PC-9 (cell line): ENCODE measurements at regions of chr2 and their contacts with region 1.

Region 1: GRCh38 chr2:109613922-109614714 is at the starts of genes SEPTIN10 and SOWAHC:
- DNase-seq: peak; percentile 92 to 97
- H3K4me3 ChIP-seq: peak within 1 kb of the TSS; percentile 82
- H3K27ac ChIP-seq: peak within 1 kb of the TSS; percentile 55
- H3K4me1 ChIP-seq: peaks cover 57% of the 10 kb centered on the region
- H3K27me3 ChIP-seq: no peaks in the 10 kb centered on the region
- CTCF ChIP-seq: no peak
- total RNA-seq, gene SEPTIN10: 112 and 119 TPM in 2 replicates
- total RNA-seq, gene SOWAHC: 12.8 and 14.3 TPM in 2 replicates

Region 2: GRCh38 chr2:109435901-109436598 is 178.1 kb before region 1 on chr2:
- CTCF ChIA-PET with region 1: no interaction called
- POLR2A ChIA-PET with region 1: no interaction called
- intact Hi-C with region 1: no loop called
- DNase-seq: no peak
- H3K4me3 ChIP-seq: no peak overlapping the region
- H3K27ac ChIP-seq: no peak overlapping the region
- H3K4me1 ChIP-seq: no peaks in the 10 kb centered on the region
- H3K27me3 ChIP-seq: no peaks in the 10 kb centered on the region
- CTCF ChIP-seq: no peak

Region 3: DNA sequence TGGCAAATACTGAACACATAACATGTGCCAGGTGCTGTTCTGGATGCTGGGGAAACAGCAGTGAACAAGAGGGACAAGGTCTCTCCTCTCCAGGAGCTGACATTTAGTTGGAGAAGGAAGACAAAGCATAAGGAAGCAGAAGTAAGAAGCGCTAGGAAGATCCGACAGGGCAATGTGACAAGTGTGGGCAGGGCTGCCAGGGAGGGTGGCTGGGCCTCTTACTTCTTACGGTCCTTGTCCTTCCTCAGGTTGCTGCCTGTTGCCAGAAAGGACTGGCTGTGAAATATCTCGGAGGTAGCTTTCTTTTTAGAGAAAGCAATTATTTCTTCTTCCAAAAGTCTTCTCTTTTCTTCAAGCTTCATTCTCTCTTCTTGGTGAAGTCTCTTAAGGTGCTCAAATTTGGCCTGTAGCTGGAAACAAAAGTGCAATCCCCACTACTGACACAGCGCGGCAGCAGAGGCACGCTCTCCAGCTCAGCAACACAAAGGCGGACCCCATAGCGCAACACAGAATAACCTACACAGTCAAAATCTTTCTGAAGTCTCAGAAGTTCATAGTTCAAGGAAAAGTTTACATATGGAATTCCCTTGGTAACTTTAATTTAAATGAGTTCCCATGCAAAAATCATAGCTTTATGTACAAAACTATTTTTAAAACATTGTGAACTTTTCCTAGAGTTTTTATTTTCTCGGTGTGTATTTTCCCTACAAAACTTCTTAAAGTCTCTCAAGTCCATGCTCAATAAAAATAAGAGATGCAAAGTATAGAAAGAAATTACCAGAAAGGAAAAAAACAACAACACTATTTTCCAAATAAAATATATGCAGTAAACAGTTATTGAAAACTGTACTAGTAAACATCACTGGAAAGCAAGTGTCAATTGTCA is 68.0 kb before region 1 on chr2:
- CTCF ChIA-PET with region 1: no interaction called
- POLR2A ChIA-PET with region 1: no interaction called
- intact Hi-C with region 1: loop called (anchors 2 kb)
- DNase-seq: peak in 1 of 2 experiments; percentile 53
- H3K4me3 ChIP-seq: no peak overlapping the region
- H3K27ac ChIP-seq: no peak overlapping the region
- H3K4me1 ChIP-seq: no peaks in the 10 kb centered on the region
- H3K27me3 ChIP-seq: no peaks in the 10 kb centered on the region
- CTCF ChIP-seq: peak; percentile 92

Region 4: GRCh38 chr2:109690822-109691547 is 76.9 kb after region 1 on chr2:
- CTCF ChIA-PET with region 1: interaction called, 5 read pairs
- POLR2A ChIA-PET with region 1: interaction called, 24 read pairs
- intact Hi-C with region 1: no loop called
- DNase-seq: peak; percentile 61 to 79
- H3K4me3 ChIP-seq: no peak overlapping the region
- H3K27ac ChIP-seq: peak overlapping the region; percentile 64
- H3K4me1 ChIP-seq: peaks cover 44% of the 10 kb centered on the region
- H3K27me3 ChIP-seq: no peaks in the 10 kb centered on the region
- CTCF ChIP-seq: no peak

Region 5: GRCh38 chr2:109702618-109702985 is 88.5 kb after region 1 on chr2:
- CTCF ChIA-PET with region 1: no interaction called
- POLR2A ChIA-PET with region 1: interaction called, 16 read pairs
- intact Hi-C with region 1: loop called (anchors 1 kb)
- DNase-seq: peak; percentile 49 to 96
- H3K4me3 ChIP-seq: peak overlapping the region; percentile 32; the same call in 1 of the 2 replicates
- H3K27ac ChIP-seq: peak overlapping the region; percentile 85
- H3K4me1 ChIP-seq: peaks cover 59% of the 10 kb centered on the region
- H3K27me3 ChIP-seq: no peaks in the 10 kb centered on the region
- CTCF ChIP-seq: no peak

Region 6: GRCh38 chr2:109715313-109715805 is 101.2 kb after region 1 on chr2:
- CTCF ChIA-PET with region 1: interaction called, 6 read pairs
- POLR2A ChIA-PET with region 1: interaction called, 19 read pairs
- intact Hi-C with region 1: loop called (anchors 1 kb)
- DNase-seq: peak in 1 of 2 experiments; percentile 55
- H3K4me3 ChIP-seq: no peak overlapping the region
- H3K27ac ChIP-seq: no peak overlapping the region
- H3K4me1 ChIP-seq: no peaks in the 10 kb centered on the region
- H3K27me3 ChIP-seq: no peaks in the 10 kb centered on the region
- CTCF ChIP-seq: peak; percentile 70

Region 7: GRCh38 chr2:109722026-109722425 is 107.9 kb after region 1 on chr2:
- CTCF ChIA-PET with region 1: interaction called, 6 read pairs
- POLR2A ChIA-PET with region 1: interaction called, 27 read pairs
- intact Hi-C with region 1: no loop called
- DNase-seq: no peak
- H3K4me3 ChIP-seq: no peak overlapping the region
- H3K27ac ChIP-seq: no peak overlapping the region
- H3K4me1 ChIP-seq: no peaks in the 10 kb centered on the region
- H3K27me3 ChIP-seq: no peaks in the 10 kb centered on the region
- CTCF ChIP-seq: no peak

Region 8: GRCh38 chr2:110688594-110689091 is 1074.5 kb after region 1 on chr2:
- CTCF ChIA-PET with region 1: no interaction called
- POLR2A ChIA-PET with region 1: interaction called, 29 read pairs
- intact Hi-C with region 1: no loop called
- DNase-seq: no peak
- H3K4me3 ChIP-seq: no peak overlapping the region
- H3K27ac ChIP-seq: no peak overlapping the region
- H3K4me1 ChIP-seq: no peaks in the 10 kb centered on the region; the same call in 1 of the 2 replicates
- H3K27me3 ChIP-seq: no peaks in the 10 kb centered on the region
- CTCF ChIP-seq: no peak